ENCODE measurements at regions of chr17 and their contacts with region 1.

Region 1: GRCh38 chr17:27332485-27333409 is 38.8 kb downstream of the WSB1 start:
- DNase-seq: peak; percentile 95
- ATAC-seq: peak; percentile 95
- H3K4me3 ChIP-seq: peak overlapping the region; percentile 74
- H3K27ac ChIP-seq: peak overlapping the region; percentile 83
- H3K4me1 ChIP-seq: peaks cover 16% of the 10 kb centered on the region
- H3K27me3 ChIP-seq: no peaks in the 10 kb centered on the region
- CTCF ChIP-seq: peak; percentile 75

Region 2: GRCh38 chr17:27236717-27237315 is 95.9 kb before region 1 on chr17:
- CTCF ChIA-PET with region 1: interaction called, 18 read pairs
- POLR2A ChIA-PET with region 1: no interaction called
- intact Hi-C with region 1: loop called (anchors 1 kb)
- DNase-seq: peak; percentile 88
- ATAC-seq: peak; percentile 50
- H3K4me3 ChIP-seq: no peak overlapping the region
- H3K27ac ChIP-seq: no peak overlapping the region
- H3K4me1 ChIP-seq: peaks cover 26% of the 10 kb centered on the region
- H3K27me3 ChIP-seq: no peaks in the 10 kb centered on the region
- CTCF ChIP-seq: peak; percentile 82

Region 3: GRCh38 chr17:27293898-27294688 is 38.7 kb before region 1 on chr17 and contains the start of gene WSB1:
- CTCF ChIA-PET with region 1: interaction called, 4 read pairs
- POLR2A ChIA-PET with region 1: no interaction called
- intact Hi-C with region 1: loop called (anchors 5 kb)
- DNase-seq: peak; percentile 83
- ATAC-seq: peak; percentile 80
- H3K4me3 ChIP-seq: peak within 1 kb of the TSS; percentile 98
- H3K27ac ChIP-seq: peak within 1 kb of the TSS; percentile 74
- H3K4me1 ChIP-seq: peaks cover 19% of the 10 kb centered on the region
- H3K27me3 ChIP-seq: no peaks in the 10 kb centered on the region
- CTCF ChIP-seq: no peak
- total RNA-seq, gene WSB1: 32.0 and 35.1 TPM in 2 replicates

Region 4: GRCh38 chr17:27381007-27381501 is 48.3 kb after region 1 on chr17:
- CTCF ChIA-PET with region 1: no interaction called
- POLR2A ChIA-PET with region 1: no interaction called
- intact Hi-C with region 1: no loop called
- DNase-seq: peak; percentile 43
- ATAC-seq: no peak
- H3K4me3 ChIP-seq: no peak overlapping the region
- H3K27ac ChIP-seq: no peak overlapping the region
- H3K4me1 ChIP-seq: peaks cover 43% of the 10 kb centered on the region
- H3K27me3 ChIP-seq: no peaks in the 10 kb centered on the region
- CTCF ChIP-seq: peak; percentile 72

Region 5: GRCh38 chr17:27578718-27579085 is 246.0 kb after region 1 on chr17:
- CTCF ChIA-PET with region 1: no interaction called
- POLR2A ChIA-PET with region 1: no interaction called
- intact Hi-C with region 1: no loop called
- DNase-seq: no peak
- ATAC-seq: no peak
- H3K4me3 ChIP-seq: no peak overlapping the region
- H3K27ac ChIP-seq: no peak overlapping the region
- H3K4me1 ChIP-seq: peaks cover 13% of the 10 kb centered on the region; the same call in 1 of the 2 replicates
- H3K27me3 ChIP-seq: no peaks in the 10 kb centered on the region
- CTCF ChIP-seq: no peak

Region 6: GRCh38 chr17:28282596-28282995 is 949.8 kb after region 1 on chr17:
- CTCF ChIA-PET with region 1: no interaction called
- POLR2A ChIA-PET with region 1: no interaction called
- intact Hi-C with region 1: no loop called
- DNase-seq: peak; percentile 43
- ATAC-seq: no peak
- H3K4me3 ChIP-seq: no peak overlapping the region
- H3K27ac ChIP-seq: no peak overlapping the region
- H3K4me1 ChIP-seq: peaks cover 10% of the 10 kb centered on the region
- H3K27me3 ChIP-seq: no peaks in the 10 kb centered on the region
- CTCF ChIP-seq: no peak